Caco-2 (cell line): ENCODE measurements at regions of chr14 and their contacts with region 1.

Region 1: GRCh38 chr14:90368946-90369721 is 27.7 kb upstream of the CALM1 start:
- DNase-seq: peak; percentile 39 to 62
- H3K4me3 ChIP-seq: no peak overlapping the region
- H3K4me3 Mint-ChIP-seq: no peak overlapping the region
- H3K27ac Mint-ChIP-seq: no peak overlapping the region
- H3K4me1 ChIP-seq: peaks cover 23% of the 10 kb centered on the region
- H3K4me1 Mint-ChIP-seq: peaks cover 13% of the 10 kb centered on the region
- H3K27me3 ChIP-seq: no peaks in the 10 kb centered on the region
- H3K27me3 Mint-ChIP-seq: no peaks in the 10 kb centered on the region
- CTCF ChIP-seq: no peak

Region 2: DNA sequence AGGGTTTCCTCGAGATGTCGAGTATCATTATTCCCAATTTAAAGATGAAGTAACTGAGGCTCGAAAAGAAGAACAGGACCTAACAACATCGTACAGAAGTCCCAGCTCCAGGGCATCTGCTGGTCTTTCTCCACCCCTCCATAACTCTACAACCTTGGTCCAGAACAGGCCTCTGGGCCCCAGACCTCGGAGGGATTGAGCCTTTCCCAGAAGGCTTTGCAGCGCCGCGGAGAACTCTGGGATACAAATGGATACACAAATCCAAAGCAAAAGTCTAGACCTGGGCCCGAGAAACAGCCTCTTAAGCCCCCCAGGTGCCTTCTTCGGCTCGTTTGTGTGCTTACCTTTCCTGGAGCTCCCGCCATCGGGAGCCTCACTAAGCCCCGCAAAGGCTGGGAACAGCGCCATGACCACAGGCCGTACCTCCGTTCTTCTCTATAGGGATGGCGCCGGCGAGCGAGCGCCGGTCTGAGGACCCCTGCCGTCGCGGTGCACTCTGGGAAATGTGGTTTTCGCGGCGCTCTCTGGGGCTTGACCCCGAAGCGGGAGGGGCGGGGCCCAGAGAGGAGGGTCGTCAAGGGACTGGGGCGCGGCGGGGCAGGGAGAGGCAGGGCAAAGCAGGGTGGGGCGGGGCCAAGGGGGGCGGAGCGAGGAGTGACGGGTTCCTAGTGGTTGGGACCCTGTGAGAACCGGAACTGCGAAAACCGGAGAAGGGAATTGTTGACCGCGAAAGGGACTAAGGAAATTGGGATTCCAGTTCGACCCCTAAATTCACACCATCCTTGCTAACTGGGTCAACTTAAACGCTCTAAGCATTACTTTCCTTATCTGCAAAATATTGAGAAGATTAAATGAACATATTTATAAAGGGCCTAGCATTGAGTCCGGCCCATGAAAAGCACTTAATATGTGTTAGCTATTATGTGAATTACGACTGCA is 37.4 kb before region 1 on chr14 and contains the start of gene NRDE2:
- CTCF ChIA-PET with region 1: no interaction called
- POLR2A ChIA-PET with region 1: interaction called, 12 read pairs
- intact Hi-C with region 1: no loop called
- DNase-seq: peak; percentile 99
- H3K4me3 ChIP-seq: peak within 1 kb of the TSS; percentile 37
- H3K4me3 Mint-ChIP-seq: peak within 1 kb of the TSS; percentile 91
- H3K27ac Mint-ChIP-seq: peak within 1 kb of the TSS; percentile 95
- H3K4me1 ChIP-seq: peaks cover 18% of the 10 kb centered on the region
- H3K4me1 Mint-ChIP-seq: peaks cover 16% of the 10 kb centered on the region
- H3K27me3 ChIP-seq: no peaks in the 10 kb centered on the region
- H3K27me3 Mint-ChIP-seq: no peaks in the 10 kb centered on the region
- CTCF ChIP-seq: no peak
- total RNA-seq, gene NRDE2: 17.1 and 18.0 TPM in 2 replicates

Region 3: DNA sequence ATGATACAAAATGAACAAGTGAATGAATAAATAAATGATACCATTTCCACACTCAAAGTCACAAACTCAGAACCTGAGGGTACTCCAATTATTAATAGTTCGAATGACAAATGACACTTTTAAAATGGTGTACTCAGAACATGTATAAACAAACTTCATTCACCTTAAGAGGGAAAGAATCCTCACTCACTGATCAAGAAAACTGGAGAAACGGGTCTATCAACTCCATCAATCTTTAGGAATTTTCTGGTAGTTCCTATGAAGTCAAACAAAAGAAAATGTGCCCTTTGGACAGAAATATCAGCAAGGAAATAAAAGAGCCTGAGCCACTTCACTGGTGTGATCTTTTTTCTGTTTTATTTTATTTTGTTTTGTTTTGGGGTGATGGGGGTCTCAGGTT is 32.2 kb before region 1 on chr14:
- CTCF ChIA-PET with region 1: no interaction called
- POLR2A ChIA-PET with region 1: no interaction called
- intact Hi-C with region 1: loop called (anchors 1 kb)
- DNase-seq: peak in 1 of 2 experiments; percentile 80
- H3K4me3 ChIP-seq: no peak overlapping the region
- H3K4me3 Mint-ChIP-seq: peak overlapping the region; percentile 62
- H3K27ac Mint-ChIP-seq: peak overlapping the region; percentile 87
- H3K4me1 ChIP-seq: peaks cover 31% of the 10 kb centered on the region
- H3K4me1 Mint-ChIP-seq: peaks cover 22% of the 10 kb centered on the region
- H3K27me3 ChIP-seq: no peaks in the 10 kb centered on the region
- H3K27me3 Mint-ChIP-seq: no peaks in the 10 kb centered on the region
- CTCF ChIP-seq: no peak

Region 4: GRCh38 chr14:90500651-90501370 is 131.7 kb after region 1 on chr14:
- CTCF ChIA-PET with region 1: no interaction called
- POLR2A ChIA-PET with region 1: no interaction called
- intact Hi-C with region 1: loop called (anchors 1 kb)
- DNase-seq: no peak
- H3K4me3 ChIP-seq: no peak overlapping the region
- H3K4me3 Mint-ChIP-seq: no peak overlapping the region
- H3K27ac Mint-ChIP-seq: peak overlapping the region; percentile 96
- H3K4me1 ChIP-seq: peaks cover 58% of the 10 kb centered on the region
- H3K4me1 Mint-ChIP-seq: peaks cover 34% of the 10 kb centered on the region
- H3K27me3 ChIP-seq: no peaks in the 10 kb centered on the region
- H3K27me3 Mint-ChIP-seq: no peaks in the 10 kb centered on the region
- CTCF ChIP-seq: no peak

Region 5: DNA sequence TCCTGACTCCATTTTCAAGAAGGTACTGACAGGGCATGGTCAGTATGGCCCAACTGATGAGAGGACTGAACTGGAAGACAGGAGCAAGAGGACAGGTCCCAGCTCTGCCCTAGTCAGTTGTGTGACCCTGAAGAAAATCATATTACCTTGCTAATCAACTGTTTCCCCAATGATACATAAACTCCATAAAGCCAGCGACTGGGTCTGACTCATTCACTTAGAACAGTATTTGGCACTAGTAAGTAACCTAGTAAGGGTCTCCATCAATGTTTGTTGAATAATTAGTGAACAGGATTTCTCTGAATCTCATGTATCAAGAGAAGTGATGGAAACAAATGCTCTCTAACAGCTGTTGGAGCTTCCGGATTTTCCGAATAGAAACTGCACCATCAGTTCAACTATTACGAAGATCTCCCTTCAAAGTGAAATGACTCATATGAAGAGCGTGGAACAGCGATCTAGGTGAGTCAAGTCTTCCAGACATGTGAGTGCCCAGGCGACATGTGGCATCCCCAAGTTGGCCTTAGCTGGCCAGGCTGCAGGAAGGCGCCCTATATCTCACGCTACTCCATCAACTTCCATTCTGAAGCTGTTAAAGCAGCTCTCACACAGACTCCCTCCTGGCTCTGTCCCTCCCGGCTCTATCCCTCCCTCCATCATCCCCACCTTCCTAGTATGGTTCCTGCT is 352.6 kb after region 1 on chr14:
- CTCF ChIA-PET with region 1: no interaction called
- POLR2A ChIA-PET with region 1: no interaction called
- intact Hi-C with region 1: no loop called
- DNase-seq: no peak
- H3K4me3 ChIP-seq: no peak overlapping the region
- H3K4me3 Mint-ChIP-seq: no peak overlapping the region
- H3K27ac Mint-ChIP-seq: no peak overlapping the region
- H3K4me1 ChIP-seq: peaks cover 2% of the 10 kb centered on the region
- H3K4me1 Mint-ChIP-seq: peaks cover 16% of the 10 kb centered on the region
- H3K27me3 ChIP-seq: no peaks in the 10 kb centered on the region
- H3K27me3 Mint-ChIP-seq: no peaks in the 10 kb centered on the region
- CTCF ChIP-seq: no peak